Ovary (tissue), 10 donors: ENCODE measurements at regions of chr12 and their contacts with region 1.

Region 1: DNA sequence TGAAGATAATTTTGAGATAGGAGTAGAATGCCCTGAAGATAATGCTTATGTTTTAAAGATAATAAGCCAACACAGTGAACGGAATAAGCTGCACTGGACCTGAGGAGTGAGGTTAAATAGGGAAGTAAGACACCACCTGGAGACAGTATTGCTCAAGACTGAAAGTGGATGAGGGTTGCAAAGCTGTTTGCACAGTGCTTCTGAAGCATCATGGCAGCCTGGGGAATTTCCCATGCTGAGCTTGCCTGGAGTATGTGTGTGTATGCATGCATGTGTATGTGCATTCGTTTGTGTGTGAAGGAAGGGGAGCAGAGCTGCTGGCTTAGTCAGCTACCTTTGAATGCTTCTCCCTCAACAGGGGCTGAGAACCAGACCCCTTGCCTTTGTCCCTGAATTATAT is 35.8 kb downstream of the BHLHE41 start:
- DNase-seq: no peak
- H3K4me3 ChIP-seq: no peak overlapping the region
- H3K27ac ChIP-seq: no peak overlapping the region
- H3K4me1 ChIP-seq: no peaks in the 10 kb centered on the region
- H3K27me3 ChIP-seq: no peaks in the 10 kb centered on the region
- CTCF ChIP-seq: no peak
- EP300 ChIP-seq: no peak
- POLR2A ChIP-seq: no peak

Region 2: DNA sequence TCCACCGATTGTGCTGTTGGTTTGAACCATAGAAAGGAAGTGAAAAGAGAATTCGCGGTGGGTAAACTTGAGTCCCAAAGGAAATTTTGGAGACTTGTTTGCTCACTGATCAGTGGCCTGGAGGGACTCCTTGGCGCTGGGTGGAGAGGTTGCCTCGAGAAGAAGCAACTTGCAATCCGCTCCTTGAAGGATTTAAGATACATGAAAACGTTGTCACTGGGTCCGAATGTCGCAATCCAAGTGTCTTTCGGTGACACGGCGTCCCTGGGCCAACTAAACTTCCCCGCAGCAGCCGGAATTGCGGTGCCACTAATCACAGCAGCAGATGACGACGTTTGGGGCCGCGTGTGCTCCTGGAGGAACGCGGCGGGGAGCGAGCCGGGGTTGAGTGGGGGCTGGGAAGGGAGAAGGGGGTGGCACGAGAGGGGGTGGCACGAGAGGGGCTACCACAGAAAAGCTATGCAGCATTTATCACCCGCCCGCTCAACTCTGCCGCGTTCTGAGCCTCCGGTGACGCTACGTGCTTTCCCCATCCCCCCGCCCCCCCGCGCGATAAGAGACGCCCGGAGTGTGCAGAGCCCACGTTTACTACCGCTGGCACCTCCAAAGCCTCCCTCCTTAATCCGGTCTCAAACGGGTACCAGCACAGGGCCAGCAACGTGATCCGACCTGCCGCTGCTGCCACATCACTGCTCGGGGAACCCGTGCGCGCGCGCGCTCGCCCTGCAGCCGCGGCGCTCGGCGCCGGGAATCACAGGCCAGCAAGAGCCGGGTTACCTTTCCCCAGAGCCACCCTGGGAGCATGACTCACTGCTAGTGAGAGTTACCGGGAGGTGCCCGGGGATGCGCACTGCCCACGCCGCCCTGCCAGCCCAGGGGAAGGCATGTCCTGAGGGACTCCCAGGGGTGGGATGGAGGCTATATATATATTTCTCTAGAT is 36.7 kb after region 1 on chr12:
- intact Hi-C with region 1: no loop called
- DNase-seq: peak; percentile 77 to 82 (median 80)
- H3K4me3 ChIP-seq: peak overlapping the region; percentile 48
- H3K27ac ChIP-seq: peak overlapping the region; percentile 52 to 94
- H3K4me1 ChIP-seq: peaks cover 5% of the 10 kb centered on the region
- H3K27me3 ChIP-seq: no peaks in the 10 kb centered on the region
- CTCF ChIP-seq: no peak
- EP300 ChIP-seq: no peak
- POLR2A ChIP-seq: peak; percentile 49

Region 3: GRCh38 chr12:26614020-26614616 is 525.1 kb after region 1 on chr12:
- intact Hi-C with region 1: loop called in 1 of 4 experiments (anchors 5 kb)
- DNase-seq: peak in 3 of 5 donors; percentile 23 to 51 (median 47)
- H3K4me3 ChIP-seq: no peak overlapping the region
- H3K27ac ChIP-seq: no peak overlapping the region
- H3K4me1 ChIP-seq: no peaks in the 10 kb centered on the region
- H3K27me3 ChIP-seq: no peaks in the 10 kb centered on the region
- CTCF ChIP-seq: peak in 1 of 3 donors; percentile 26
- EP300 ChIP-seq: no peak
- POLR2A ChIP-seq: no peak